ENCODE measurements at regions of chr9 and their contacts with region 1.

Region 1: GRCh38 chr9:116058456-116058855 is 95.1 kb upstream of the PAPPA start:
- DNase-seq: no peak
- ATAC-seq: no peak
- H3K4me3 ChIP-seq: no peak overlapping the region
- H3K4me3 Mint-ChIP-seq: no peak overlapping the region
- H3K27ac ChIP-seq: no peak overlapping the region
- H3K27ac Mint-ChIP-seq: no peak overlapping the region
- H3K4me1 ChIP-seq: no peaks in the 10 kb centered on the region
- H3K4me1 Mint-ChIP-seq: no peaks in the 10 kb centered on the region
- H3K27me3 ChIP-seq: no peaks in the 10 kb centered on the region
- H3K27me3 Mint-ChIP-seq: no peaks in the 10 kb centered on the region
- CTCF ChIP-seq: no peak

Region 2: DNA sequence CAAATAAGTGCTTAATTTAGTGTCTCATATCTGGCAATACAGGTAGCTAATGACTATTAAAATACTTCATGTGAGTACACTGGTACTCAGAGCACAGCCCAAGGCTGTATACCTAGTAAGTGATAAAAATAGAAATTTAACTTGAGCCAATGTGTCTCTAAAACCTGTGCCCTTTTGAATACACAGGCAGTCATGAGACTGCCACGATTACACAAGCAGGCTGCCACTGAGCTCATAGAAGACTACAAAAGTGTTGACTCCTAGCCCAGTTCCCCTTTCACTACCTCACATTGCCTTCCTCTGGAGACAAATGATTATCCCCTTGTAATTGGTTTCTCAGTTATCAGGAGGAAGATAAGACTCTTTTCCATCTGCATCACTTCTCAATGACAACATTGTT is 28.8 kb after region 1 on chr9:
- CTCF ChIA-PET with region 1: no interaction called
- POLR2A ChIA-PET with region 1: no interaction called
- intact Hi-C with region 1: no loop called
- DNase-seq: no peak
- ATAC-seq: no peak
- H3K4me3 ChIP-seq: no peak overlapping the region
- H3K4me3 Mint-ChIP-seq: no peak overlapping the region
- H3K27ac ChIP-seq: no peak overlapping the region
- H3K27ac Mint-ChIP-seq: no peak overlapping the region
- H3K4me1 ChIP-seq: no peaks in the 10 kb centered on the region
- H3K4me1 Mint-ChIP-seq: no peaks in the 10 kb centered on the region
- H3K27me3 ChIP-seq: no peaks in the 10 kb centered on the region
- H3K27me3 Mint-ChIP-seq: no peaks in the 10 kb centered on the region
- CTCF ChIP-seq: no peak

Region 3: DNA sequence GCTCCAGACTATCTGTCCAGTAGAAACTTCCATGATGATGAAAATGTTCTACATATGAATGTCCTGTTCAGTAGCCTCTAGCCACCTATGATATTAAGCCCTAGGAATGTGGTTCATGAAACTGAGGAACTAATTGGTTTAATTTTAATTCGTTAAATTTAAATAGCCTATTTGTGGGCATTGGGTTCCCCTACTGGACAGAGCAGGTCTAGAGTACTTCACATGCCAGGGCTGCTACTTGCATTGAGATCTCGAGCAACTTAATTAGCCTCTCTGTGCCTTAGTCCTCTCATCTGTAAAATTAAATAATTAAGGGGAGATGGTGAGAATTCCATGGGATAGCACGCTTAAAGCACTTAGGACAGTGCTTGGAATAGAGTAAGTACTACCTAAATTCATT is 255.2 kb after region 1 on chr9:
- CTCF ChIA-PET with region 1: no interaction called
- POLR2A ChIA-PET with region 1: no interaction called
- intact Hi-C with region 1: no loop called
- DNase-seq: no peak
- ATAC-seq: no peak
- H3K4me3 ChIP-seq: no peak overlapping the region
- H3K4me3 Mint-ChIP-seq: no peak overlapping the region
- H3K27ac ChIP-seq: no peak overlapping the region
- H3K27ac Mint-ChIP-seq: no peak overlapping the region
- H3K4me1 ChIP-seq: no peaks in the 10 kb centered on the region
- H3K4me1 Mint-ChIP-seq: no peaks in the 10 kb centered on the region
- H3K27me3 ChIP-seq: no peaks in the 10 kb centered on the region
- H3K27me3 Mint-ChIP-seq: peaks cover 6% of the 10 kb centered on the region
- CTCF ChIP-seq: no peak

Region 4: DNA sequence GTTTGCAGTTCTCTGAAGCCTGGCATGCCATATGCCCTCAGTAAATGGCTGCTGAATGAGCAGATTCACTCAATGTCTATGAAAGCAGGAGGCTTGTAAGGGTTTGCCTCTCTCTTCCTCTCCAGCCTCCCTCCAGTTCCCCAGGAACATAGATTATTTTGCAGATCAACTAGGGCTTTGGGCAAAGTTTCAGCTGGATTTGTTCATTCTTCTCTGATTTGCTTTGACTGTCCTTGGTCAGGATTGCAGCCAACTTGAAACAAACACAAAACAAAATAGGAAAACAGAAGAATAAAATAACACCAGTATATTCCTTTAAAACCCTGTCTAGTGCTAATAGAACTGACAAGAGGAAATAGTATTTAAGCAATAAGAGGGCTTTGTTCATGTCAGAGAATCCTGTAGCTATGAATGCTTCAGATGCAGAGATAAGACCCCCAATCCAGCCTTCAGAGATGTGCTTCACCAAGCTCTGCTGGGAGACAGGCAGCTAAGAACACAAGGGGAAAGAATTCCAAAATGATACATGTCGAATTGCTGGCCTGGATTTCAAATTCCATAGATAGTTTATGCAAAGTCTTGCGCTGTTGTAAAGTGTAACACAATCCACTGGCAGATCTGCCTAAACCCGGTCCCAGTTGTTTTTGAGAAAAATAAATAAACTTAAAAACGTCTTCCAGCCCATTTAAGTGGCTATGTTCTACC is 269.4 kb after region 1 on chr9:
- CTCF ChIA-PET with region 1: no interaction called
- POLR2A ChIA-PET with region 1: no interaction called
- intact Hi-C with region 1: loop called in 1 of 2 experiments (anchors 10 kb)
- DNase-seq: no peak
- ATAC-seq: no peak
- H3K4me3 ChIP-seq: no peak overlapping the region
- H3K4me3 Mint-ChIP-seq: no peak overlapping the region
- H3K27ac ChIP-seq: no peak overlapping the region
- H3K27ac Mint-ChIP-seq: no peak overlapping the region
- H3K4me1 ChIP-seq: no peaks in the 10 kb centered on the region
- H3K4me1 Mint-ChIP-seq: no peaks in the 10 kb centered on the region
- H3K27me3 ChIP-seq: peaks cover 0 to 2% of the 10 kb centered on the region in 2 experiments
- H3K27me3 Mint-ChIP-seq: peaks cover 8% of the 10 kb centered on the region
- CTCF ChIP-seq: no peak

Measured in CD4-positive, alpha-beta T cell (primary cell).